CD4-positive, alpha-beta T cell (primary cell): ENCODE measurements at regions of chr1 and their contacts with region 1.

Region 1: DNA sequence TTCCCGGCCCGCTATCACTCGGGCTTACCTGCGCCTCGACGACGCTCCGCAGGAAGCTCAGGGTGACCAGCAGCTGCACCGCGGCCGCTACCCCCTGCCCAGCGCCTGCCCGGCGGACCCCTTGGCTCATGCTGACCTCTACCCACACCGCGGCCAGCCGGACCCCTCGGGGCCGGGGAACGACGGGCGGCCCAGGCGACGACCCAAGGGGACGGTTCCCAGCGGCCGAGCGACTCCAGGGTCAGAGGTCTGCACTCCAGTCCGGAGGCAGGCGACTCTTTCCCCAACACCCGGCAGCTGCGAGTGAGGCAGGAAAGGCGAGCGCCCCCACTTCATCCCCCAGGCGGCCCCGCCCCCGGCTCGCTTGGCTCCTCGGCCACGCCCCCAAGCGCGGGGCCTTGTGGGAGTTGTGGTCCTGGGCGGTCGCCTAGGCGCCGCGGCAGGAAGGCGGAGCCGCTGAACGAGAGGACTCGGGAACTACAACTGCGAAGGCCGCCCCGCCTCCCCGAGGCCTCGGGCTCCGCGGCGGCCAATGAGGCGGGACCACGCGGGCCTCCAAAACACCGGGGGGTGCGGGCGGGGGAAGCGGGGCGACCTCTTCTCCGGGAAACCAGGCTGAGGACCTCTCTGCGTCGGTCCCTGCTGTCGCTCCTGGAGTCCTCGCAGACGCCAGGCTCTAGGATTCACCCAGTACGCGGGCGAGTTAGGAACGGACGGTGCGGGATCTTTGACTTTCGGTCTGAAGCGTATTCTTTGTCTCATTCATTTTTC is at the start of gene ERO1B:
- DNase-seq: peak; percentile 92 to 99 (median 98)
- ATAC-seq: peak; percentile 92
- H3K4me3 ChIP-seq: peak within 1 kb of the TSS; percentile 88
- H3K4me3 Mint-ChIP-seq: peak within 1 kb of the TSS; percentile 97
- H3K27ac ChIP-seq: peak within 1 kb of the TSS; percentile 63 to 81
- H3K27ac Mint-ChIP-seq: peak within 1 kb of the TSS; percentile 80
- H3K4me1 ChIP-seq: peaks cover 25% of the 10 kb centered on the region
- H3K4me1 Mint-ChIP-seq: peaks cover 57% of the 10 kb centered on the region
- H3K27me3 ChIP-seq: no peaks in the 10 kb centered on the region
- H3K27me3 Mint-ChIP-seq: no peaks in the 10 kb centered on the region
- CTCF ChIP-seq: no peak
- total RNA-seq, gene ERO1B: 15.2 to 16.5 TPM

Region 2: GRCh38 chr1:235504496-235505222 is 777.2 kb before region 1 on chr1:
- CTCF ChIA-PET with region 1: interaction called, 3 read pairs
- POLR2A ChIA-PET with region 1: no interaction called
- intact Hi-C with region 1: loop called in 1 of 2 experiments (anchors 5 kb)
- DNase-seq: peak; percentile 96 to 100 (median 98)
- ATAC-seq: peak; percentile 86
- H3K4me3 ChIP-seq: peak overlapping the region; percentile 79
- H3K4me3 Mint-ChIP-seq: peak overlapping the region; percentile 92
- H3K27ac ChIP-seq: peak overlapping the region; percentile 89 to 93
- H3K27ac Mint-ChIP-seq: peak overlapping the region; percentile 96
- H3K4me1 ChIP-seq: peaks cover 15% of the 10 kb centered on the region
- H3K4me1 Mint-ChIP-seq: peaks cover 20% of the 10 kb centered on the region
- H3K27me3 ChIP-seq: no peaks in the 10 kb centered on the region
- H3K27me3 Mint-ChIP-seq: no peaks in the 10 kb centered on the region
- CTCF ChIP-seq: peak; percentile 91

Region 3: GRCh38 chr1:235990376-235991085 is 291.3 kb before region 1 on chr1:
- CTCF ChIA-PET with region 1: no interaction called
- POLR2A ChIA-PET with region 1: no interaction called
- intact Hi-C with region 1: no loop called
- DNase-seq: no peak
- ATAC-seq: no peak
- H3K4me3 ChIP-seq: no peak overlapping the region
- H3K4me3 Mint-ChIP-seq: no peak overlapping the region
- H3K27ac ChIP-seq: no peak overlapping the region
- H3K27ac Mint-ChIP-seq: no peak overlapping the region
- H3K4me1 ChIP-seq: peaks cover 1% of the 10 kb centered on the region
- H3K4me1 Mint-ChIP-seq: no peaks in the 10 kb centered on the region
- H3K27me3 ChIP-seq: no peaks in the 10 kb centered on the region
- H3K27me3 Mint-ChIP-seq: no peaks in the 10 kb centered on the region
- CTCF ChIP-seq: no peak

Region 4: DNA sequence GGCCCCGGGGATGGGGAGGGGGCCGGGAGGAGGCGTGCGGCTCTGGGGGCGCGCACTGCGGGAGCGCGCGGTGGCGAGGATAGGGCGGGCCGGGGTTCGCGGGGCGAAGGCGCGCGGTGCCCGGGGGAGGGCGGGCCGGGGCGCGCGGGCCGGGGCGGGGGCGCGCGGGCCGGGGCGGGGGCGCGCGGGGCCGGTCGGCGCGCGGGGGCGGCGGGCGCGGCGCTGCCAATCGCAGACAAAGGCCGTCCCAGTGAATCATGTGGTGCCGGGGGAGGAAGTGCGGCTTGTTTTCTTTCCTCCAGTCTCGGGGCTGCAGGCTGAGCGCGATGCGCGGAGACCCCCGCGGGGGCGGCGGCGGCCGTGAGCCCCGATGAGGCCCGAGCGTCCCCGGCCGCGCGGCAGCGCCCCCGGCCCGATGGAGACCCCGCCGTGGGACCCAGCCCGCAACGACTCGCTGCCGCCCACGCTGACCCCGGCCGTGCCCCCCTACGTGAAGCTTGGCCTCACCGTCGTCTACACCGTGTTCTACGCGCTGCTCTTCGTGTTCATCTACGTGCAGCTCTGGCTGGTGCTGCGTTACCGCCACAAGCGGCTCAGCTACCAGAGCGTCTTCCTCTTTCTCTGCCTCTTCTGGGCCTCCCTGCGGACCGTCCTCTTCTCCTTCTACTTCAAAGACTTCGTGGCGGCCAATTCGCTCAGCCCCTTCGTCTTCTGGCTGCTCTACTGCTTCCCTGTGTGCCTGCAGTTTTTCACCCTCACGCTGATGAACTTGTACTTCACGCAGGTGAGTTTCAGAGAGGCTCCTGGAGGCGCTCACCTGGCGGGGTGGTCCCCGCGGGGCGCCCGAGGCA is 139.4 kb before region 1 on chr1 and contains the start of gene GPR137B:
- CTCF ChIA-PET with region 1: no interaction called
- POLR2A ChIA-PET with region 1: interaction called, 7 read pairs
- intact Hi-C with region 1: loop called in 1 of 2 experiments (anchors 5 kb)
- DNase-seq: peak; percentile 19 to 74 (median 52)
- ATAC-seq: peak; percentile 75
- H3K4me3 ChIP-seq: peak within 1 kb of the TSS; percentile 80
- H3K4me3 Mint-ChIP-seq: peak within 1 kb of the TSS; percentile 100
- H3K27ac ChIP-seq: no peak within 1 kb of the TSS
- H3K27ac Mint-ChIP-seq: peak within 1 kb of the TSS; percentile 74
- H3K4me1 ChIP-seq: peaks cover 26% of the 10 kb centered on the region
- H3K4me1 Mint-ChIP-seq: peaks cover 36% of the 10 kb centered on the region
- H3K27me3 ChIP-seq: peaks cover 14 to 16% of the 10 kb centered on the region in 2 experiments
- H3K27me3 Mint-ChIP-seq: peaks cover 39% of the 10 kb centered on the region
- CTCF ChIP-seq: no peak
- total RNA-seq, gene GPR137B: 6.3 to 7.4 TPM

Region 5: GRCh38 chr1:236400061-236400603 is 118.3 kb after region 1 on chr1:
- CTCF ChIA-PET with region 1: no interaction called
- POLR2A ChIA-PET with region 1: no interaction called
- intact Hi-C with region 1: no loop called
- DNase-seq: no peak
- ATAC-seq: no peak
- H3K4me3 ChIP-seq: no peak overlapping the region
- H3K4me3 Mint-ChIP-seq: no peak overlapping the region
- H3K27ac ChIP-seq: no peak overlapping the region
- H3K27ac Mint-ChIP-seq: no peak overlapping the region
- H3K4me1 ChIP-seq: peaks cover 11% of the 10 kb centered on the region
- H3K4me1 Mint-ChIP-seq: peaks cover 25% of the 10 kb centered on the region
- H3K27me3 ChIP-seq: peaks cover 7 to 12% of the 10 kb centered on the region in 2 experiments
- H3K27me3 Mint-ChIP-seq: peaks cover 44% of the 10 kb centered on the region
- CTCF ChIP-seq: no peak

Region 6: DNA sequence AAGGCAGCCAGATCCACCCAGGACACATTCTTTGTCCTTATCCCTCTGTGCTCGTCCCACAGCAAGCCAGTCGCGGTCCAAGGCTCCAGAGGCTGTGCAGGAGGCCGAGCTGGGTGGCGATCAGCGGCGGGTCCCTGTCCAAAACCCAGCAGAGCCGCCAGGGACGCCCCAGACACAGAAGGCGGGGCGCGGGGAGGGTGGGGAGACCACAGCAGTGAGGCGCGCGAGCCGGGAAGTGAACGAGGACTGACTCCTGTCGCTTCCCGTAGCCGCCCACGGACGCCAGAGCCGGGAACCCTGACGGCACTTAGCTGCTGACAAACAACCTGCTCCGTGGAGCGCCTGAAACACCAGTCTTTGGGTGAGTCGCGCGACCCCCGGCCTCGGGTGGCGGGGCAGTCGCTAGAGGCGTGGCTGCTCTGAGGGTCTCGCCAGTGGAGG is 241.9 kb after region 1 on chr1 and contains the start of gene LGALS8:
- CTCF ChIA-PET with region 1: no interaction called
- POLR2A ChIA-PET with region 1: interaction called, 3 read pairs
- intact Hi-C with region 1: loop called (anchors 5 to 10 kb)
- DNase-seq: peak; percentile 73 to 92 (median 83)
- ATAC-seq: peak; percentile 80
- H3K4me3 ChIP-seq: peak within 1 kb of the TSS; percentile 82
- H3K4me3 Mint-ChIP-seq: peak within 1 kb of the TSS; percentile 99
- H3K27ac ChIP-seq: peak within 1 kb of the TSS; percentile 82 to 85
- H3K27ac Mint-ChIP-seq: peak within 1 kb of the TSS; percentile 97
- H3K4me1 ChIP-seq: peaks cover 12% of the 10 kb centered on the region
- H3K4me1 Mint-ChIP-seq: peaks cover 40% of the 10 kb centered on the region
- H3K27me3 ChIP-seq: no peaks in the 10 kb centered on the region
- H3K27me3 Mint-ChIP-seq: no peaks in the 10 kb centered on the region
- CTCF ChIP-seq: no peak
- total RNA-seq, gene LGALS8: 138 to 144 TPM

Region 7: DNA sequence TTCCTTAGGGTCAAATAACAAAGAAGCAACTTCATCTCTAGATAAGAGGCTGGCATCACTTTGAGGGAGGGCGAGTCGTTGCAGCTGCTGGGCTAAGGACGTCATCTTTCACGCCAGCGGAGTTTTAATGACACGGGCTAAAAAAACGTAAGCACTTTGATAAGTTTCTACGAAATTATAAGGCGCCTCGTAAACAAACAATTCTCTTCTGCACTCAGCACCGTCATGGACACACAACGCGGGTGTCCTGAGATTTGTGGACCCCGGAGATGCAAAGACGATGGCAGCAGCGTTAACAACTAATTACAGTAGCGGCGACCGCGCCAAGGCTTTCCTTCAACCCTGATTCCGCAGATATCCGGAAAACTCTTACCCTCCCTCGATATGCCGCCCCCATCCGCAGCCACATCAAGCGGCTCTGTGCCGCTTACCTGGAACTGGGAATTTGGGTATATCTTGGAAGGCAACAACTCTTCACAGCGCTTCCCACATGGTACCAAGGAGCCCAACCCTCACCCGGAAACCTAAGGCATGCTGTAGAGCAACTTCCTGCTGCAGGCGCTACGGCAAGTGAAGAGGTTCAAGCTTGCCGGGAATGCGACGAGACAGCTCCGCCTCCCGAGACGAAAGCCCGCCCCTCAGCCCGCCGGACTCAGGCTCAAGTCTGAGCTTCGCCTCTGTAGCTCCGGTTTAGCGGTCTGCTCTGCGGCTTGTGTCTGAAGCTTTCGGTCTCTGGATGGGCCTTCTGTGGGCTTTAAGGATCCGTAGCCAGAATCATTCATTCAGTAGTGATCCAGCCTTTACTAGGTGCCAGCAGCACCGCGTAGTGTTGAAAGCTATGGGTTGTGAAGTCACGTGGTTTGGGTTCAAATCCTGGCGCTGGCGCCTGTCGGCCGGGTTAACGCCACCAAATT is 322.4 kb after region 1 on chr1 and contains the start of gene HEATR1:
- CTCF ChIA-PET with region 1: no interaction called
- POLR2A ChIA-PET with region 1: no interaction called
- intact Hi-C with region 1: loop called in 1 of 2 experiments (anchors 5 kb)
- DNase-seq: peak; percentile 67 to 92 (median 80)
- ATAC-seq: peak; percentile 81
- H3K4me3 ChIP-seq: peak within 1 kb of the TSS; percentile 82
- H3K4me3 Mint-ChIP-seq: peak within 1 kb of the TSS; percentile 98
- H3K27ac ChIP-seq: peak within 1 kb of the TSS in 1 of 2 donors; percentile 65
- H3K27ac Mint-ChIP-seq: peak within 1 kb of the TSS; percentile 96
- H3K4me1 ChIP-seq: peaks cover 14% of the 10 kb centered on the region
- H3K4me1 Mint-ChIP-seq: peaks cover 44% of the 10 kb centered on the region
- H3K27me3 ChIP-seq: peaks cover 13 to 14% of the 10 kb centered on the region in 2 experiments
- H3K27me3 Mint-ChIP-seq: peaks cover 18% of the 10 kb centered on the region
- CTCF ChIP-seq: no peak
- total RNA-seq, gene HEATR1: 34.9 to 37.5 TPM